ENCODE measurements at regions of chr6 and their contacts with region 1.

Region 1: DNA sequence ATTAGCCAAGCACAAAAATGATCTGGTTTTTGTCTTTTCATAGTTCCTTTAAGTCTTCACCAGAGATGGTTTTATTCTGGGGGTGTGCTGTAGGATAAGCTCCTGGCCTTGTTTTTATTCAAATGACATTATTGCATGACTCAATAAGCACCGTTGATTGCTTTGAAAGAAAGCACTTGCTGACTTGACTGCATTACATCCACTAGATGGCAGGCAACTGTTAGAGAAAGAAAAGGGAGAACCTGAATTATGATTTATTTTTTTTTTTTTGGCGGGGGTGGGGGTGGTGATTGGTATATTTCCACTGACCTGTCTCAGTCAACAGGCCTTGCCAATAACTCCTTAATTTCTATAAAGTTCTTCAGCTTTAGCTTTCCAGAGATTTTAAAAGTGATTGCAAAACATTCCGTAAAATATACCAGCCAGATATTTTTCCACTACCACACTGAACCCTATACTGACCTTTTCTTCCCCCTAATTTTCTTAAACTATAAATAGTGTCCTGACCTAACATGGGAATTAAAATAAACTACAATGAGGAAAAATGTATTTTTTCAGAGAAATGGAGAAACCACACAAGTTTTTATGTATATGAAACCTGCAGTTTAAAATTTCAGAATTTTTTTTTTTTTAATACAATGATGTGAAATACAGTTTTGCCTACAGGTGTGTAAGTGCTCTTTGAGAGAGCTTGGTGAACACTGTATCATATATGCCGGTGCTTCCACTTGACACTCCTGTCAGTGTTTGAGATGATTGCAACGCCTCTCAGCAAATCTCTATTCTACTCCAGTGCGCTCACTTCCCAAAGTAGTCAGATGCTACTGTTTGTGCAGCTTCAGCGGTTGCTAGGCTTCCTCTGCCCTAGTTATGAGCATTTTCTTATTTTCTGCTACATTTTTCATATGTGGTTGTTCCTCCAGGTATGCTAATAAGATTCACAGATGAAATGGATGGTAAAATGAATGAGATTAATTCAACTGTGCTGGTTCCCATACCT is 274.3 kb downstream of the CD109 start:
- DNase-seq: peak; percentile 76
- H3K4me3 ChIP-seq: no peak overlapping the region
- H3K27ac ChIP-seq: peak overlapping the region; percentile 33
- H3K4me1 ChIP-seq: peaks cover 33% of the 10 kb centered on the region
- H3K27me3 ChIP-seq: no peaks in the 10 kb centered on the region
- CTCF ChIP-seq: peak; percentile 83

Region 2: GRCh38 chr6:73209117-73209516 is 761.2 kb before region 1 on chr6:
- CTCF ChIA-PET with region 1: no interaction called
- POLR2A ChIA-PET with region 1: no interaction called
- intact Hi-C with region 1: no loop called
- DNase-seq: no peak
- H3K4me3 ChIP-seq: no peak overlapping the region
- H3K27ac ChIP-seq: no peak overlapping the region
- H3K4me1 ChIP-seq: no peaks in the 10 kb centered on the region
- H3K27me3 ChIP-seq: no peaks in the 10 kb centered on the region
- CTCF ChIP-seq: no peak

Region 3: DNA sequence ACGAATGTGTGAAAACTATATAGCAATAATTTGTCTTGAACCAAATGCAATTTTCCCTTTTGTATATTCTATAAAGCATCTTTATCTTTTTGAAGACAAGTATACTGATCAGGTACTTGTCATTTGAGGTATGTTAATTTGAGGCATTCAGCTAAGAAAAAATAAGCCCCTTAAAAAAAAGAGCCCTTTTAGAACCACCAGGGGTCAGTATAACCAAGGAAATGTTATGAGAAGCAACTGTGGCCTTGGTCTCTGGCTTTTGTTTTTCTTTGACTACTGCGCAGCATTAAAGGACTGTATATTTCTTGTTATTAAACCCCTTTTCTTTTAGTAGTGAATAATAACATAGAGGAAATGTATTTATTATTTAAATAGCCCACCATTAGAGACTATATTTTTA is 231.2 kb before region 1 on chr6:
- CTCF ChIA-PET with region 1: interaction called, 3 read pairs
- POLR2A ChIA-PET with region 1: no interaction called
- intact Hi-C with region 1: loop called (anchors 2 kb)
- DNase-seq: peak; percentile 83
- H3K4me3 ChIP-seq: no peak overlapping the region
- H3K27ac ChIP-seq: no peak overlapping the region
- H3K4me1 ChIP-seq: no peaks in the 10 kb centered on the region
- H3K27me3 ChIP-seq: no peaks in the 10 kb centered on the region
- CTCF ChIP-seq: peak; percentile 82

Region 4: GRCh38 chr6:73854998-73855718 is 115.1 kb before region 1 on chr6:
- CTCF ChIA-PET with region 1: no interaction called
- POLR2A ChIA-PET with region 1: no interaction called
- intact Hi-C with region 1: loop called (anchors 2 kb)
- DNase-seq: peak; percentile 83
- H3K4me3 ChIP-seq: no peak overlapping the region
- H3K27ac ChIP-seq: no peak overlapping the region
- H3K4me1 ChIP-seq: peaks cover 8% of the 10 kb centered on the region
- H3K27me3 ChIP-seq: no peaks in the 10 kb centered on the region
- CTCF ChIP-seq: peak; percentile 79

Region 5: GRCh38 chr6:74409447-74409846 is 439.2 kb after region 1 on chr6:
- CTCF ChIA-PET with region 1: no interaction called
- POLR2A ChIA-PET with region 1: no interaction called
- intact Hi-C with region 1: loop called (anchors 10 kb)
- DNase-seq: peak; percentile 44
- H3K4me3 ChIP-seq: no peak overlapping the region
- H3K27ac ChIP-seq: no peak overlapping the region
- H3K4me1 ChIP-seq: no peaks in the 10 kb centered on the region
- H3K27me3 ChIP-seq: no peaks in the 10 kb centered on the region
- CTCF ChIP-seq: peak; percentile 51; the same call in 1 of the 2 replicates

Region 6: DNA sequence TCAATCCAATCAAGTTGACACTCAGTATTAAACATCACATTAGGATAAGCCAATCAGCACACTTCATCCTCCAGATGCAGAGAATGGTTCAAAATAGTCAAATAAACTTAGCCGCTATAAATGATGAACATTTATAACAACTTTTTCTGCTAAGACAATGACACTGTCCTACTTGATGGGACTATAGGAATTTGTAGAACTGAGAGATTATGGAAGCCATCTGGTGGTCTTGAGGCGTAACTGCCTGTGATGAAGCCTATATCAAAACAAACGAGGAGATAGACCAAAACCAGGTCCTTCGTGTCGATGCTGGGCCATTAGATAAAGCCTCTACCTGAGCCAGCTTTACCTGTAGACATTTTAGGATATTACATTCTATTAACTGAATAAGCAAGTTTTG is 604.5 kb after region 1 on chr6:
- CTCF ChIA-PET with region 1: no interaction called
- POLR2A ChIA-PET with region 1: no interaction called
- intact Hi-C with region 1: loop called (anchors 1 kb)
- DNase-seq: peak; percentile 65
- H3K4me3 ChIP-seq: no peak overlapping the region
- H3K27ac ChIP-seq: no peak overlapping the region
- H3K4me1 ChIP-seq: peaks cover 18% of the 10 kb centered on the region
- H3K27me3 ChIP-seq: no peaks in the 10 kb centered on the region
- CTCF ChIP-seq: peak; percentile 74